A673 (cell line): ENCODE measurements at regions of chr3 and their contacts with region 1.

Region 1: GRCh38 chr3:175224051-175224450 is 364.9 kb downstream of the NAALADL2 start:
- DNase-seq: no peak
- H3K4me3 ChIP-seq: no peak overlapping the region
- H3K27ac ChIP-seq: no peak overlapping the region
- H3K4me1 ChIP-seq: no peaks in the 10 kb centered on the region
- H3K27me3 ChIP-seq: no peaks in the 10 kb centered on the region
- CTCF ChIP-seq: no peak

Region 2: GRCh38 chr3:174355505-174355904 is 868.5 kb before region 1 on chr3:
- CTCF ChIA-PET with region 1: no interaction called
- POLR2A ChIA-PET with region 1: interaction called, 12 read pairs
- intact Hi-C with region 1: no loop called
- DNase-seq: peak; percentile 27
- H3K4me3 ChIP-seq: no peak overlapping the region
- H3K27ac ChIP-seq: no peak overlapping the region
- H3K4me1 ChIP-seq: no peaks in the 10 kb centered on the region
- H3K27me3 ChIP-seq: no peaks in the 10 kb centered on the region
- CTCF ChIP-seq: 0 out of 2 replicates have a peak, but pooled peaks have one; percentile 37